ENCODE measurements at regions of chr5 and their contacts with region 1.

Region 1: DNA sequence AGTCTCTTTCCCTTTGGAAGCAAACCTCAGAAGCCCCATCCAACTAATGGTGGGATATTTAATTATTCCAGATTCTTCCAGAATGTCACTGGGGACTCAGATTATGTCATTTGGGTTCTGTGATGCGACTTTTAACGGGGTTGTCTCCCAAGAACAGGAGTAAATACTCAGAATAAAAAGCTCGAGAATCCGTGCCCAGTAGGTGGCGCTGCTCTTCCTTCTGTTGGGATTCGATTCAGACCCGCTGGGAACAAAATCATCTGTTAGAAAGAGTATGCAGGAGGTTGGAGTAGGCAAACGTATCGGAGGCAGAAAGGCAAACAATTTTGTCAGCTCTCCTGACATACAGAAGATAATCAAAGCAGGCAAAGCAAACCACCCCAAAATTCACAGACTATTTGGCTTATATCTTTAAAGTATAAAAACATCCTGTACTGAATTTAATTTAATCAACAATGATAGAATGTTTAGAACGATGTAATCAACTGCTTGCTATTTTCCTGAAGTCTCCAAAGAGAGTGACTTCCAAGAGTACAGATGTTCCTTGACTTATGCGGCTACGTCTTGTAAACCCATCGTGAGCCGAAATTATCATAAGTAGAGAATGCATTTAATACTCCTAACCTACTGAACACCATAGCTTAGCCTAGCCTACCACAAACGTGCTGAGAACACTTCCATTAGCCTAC is 169.8 kb upstream of the RAI14 start:
- DNase-seq: peak; percentile 83 to 87
- ATAC-seq: peak; percentile 82 to 86
- H3K4me3 ChIP-seq: no peak overlapping the region
- H3K27ac ChIP-seq: peak overlapping the region; percentile 57 to 62; a peak in 5 of 6 replicates
- H3K4me1 ChIP-seq: peaks cover 28% of the 10 kb centered on the region
- CTCF ChIP-seq: peak; percentile 96
- EP300 ChIP-seq: no peak
- POLR2A ChIP-seq: no peak
- RAD21 ChIP-seq: peak; percentile 97

Region 2: DNA sequence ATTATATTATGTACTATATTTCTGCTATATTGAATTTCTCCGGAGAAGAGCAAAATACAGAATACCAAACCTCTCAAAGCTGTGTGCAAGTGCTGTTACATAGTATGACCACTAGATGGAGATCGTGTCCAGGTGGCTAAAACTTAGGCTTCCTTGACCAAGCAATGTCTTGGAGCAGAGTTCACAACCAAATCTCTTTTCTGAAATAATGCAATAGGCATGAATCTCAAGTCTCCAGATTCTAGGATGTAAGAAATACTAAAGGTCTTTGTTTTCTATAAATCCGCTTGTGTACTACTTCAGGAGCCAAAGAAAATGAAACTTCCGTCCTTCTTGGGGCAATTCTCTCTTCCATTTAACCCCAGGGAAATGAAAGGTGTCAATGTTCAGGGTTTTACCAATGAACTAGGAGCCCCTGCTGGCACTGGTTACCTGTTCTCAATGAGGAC is 11.7 kb before region 1 on chr5:
- CTCF ChIA-PET with region 1: interaction called, 85 read pairs
- POLR2A ChIA-PET with region 1: no interaction called
- DNase-seq: peak; percentile 57 to 70
- ATAC-seq: peak; percentile 68 to 93; a peak in 5 of 6 replicates
- H3K4me3 ChIP-seq: no peak overlapping the region
- H3K27ac ChIP-seq: no peak overlapping the region
- H3K4me1 ChIP-seq: no peaks in the 10 kb centered on the region
- CTCF ChIP-seq: peak; percentile 92
- EP300 ChIP-seq: no peak
- POLR2A ChIP-seq: no peak
- RAD21 ChIP-seq: peak; percentile 90 to 94

Region 3: GRCh38 chr5:34499001-34499734 is 12.9 kb after region 1 on chr5:
- CTCF ChIA-PET with region 1: interaction called, 35 read pairs
- POLR2A ChIA-PET with region 1: interaction called, 3 read pairs
- DNase-seq: peak in 1 of 2 experiments; percentile 31
- ATAC-seq: peak; percentile 72 to 82
- H3K4me3 ChIP-seq: no peak overlapping the region
- H3K27ac ChIP-seq: peak overlapping the region; percentile 53 to 80; a peak in 5 of 6 replicates
- H3K4me1 ChIP-seq: peaks cover 32% of the 10 kb centered on the region
- CTCF ChIP-seq: no peak
- EP300 ChIP-seq: no peak
- POLR2A ChIP-seq: no peak
- RAD21 ChIP-seq: no peak

Region 4: DNA sequence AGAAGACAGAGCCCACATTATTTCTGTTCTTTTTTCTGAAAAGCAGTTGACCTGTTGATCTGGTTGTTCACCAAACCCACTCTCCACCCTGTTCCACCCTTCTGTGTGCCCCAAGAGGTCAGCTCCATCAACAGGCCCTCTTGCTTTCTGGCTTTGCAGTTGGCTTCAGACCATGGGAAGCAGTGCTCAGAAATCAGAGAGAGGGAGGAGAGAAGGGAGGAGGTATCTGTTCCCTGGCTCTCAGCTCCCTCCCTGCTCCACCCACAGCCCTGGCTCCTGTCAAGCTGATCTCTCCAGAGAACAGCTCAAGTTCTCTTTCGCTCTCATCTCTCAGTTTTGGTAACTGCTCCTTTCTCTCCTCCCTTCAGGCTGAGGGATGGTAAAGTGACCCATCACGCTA is 25.6 kb after region 1 on chr5:
- CTCF ChIA-PET with region 1: interaction called, 11 read pairs
- POLR2A ChIA-PET with region 1: no interaction called
- DNase-seq: no peak
- ATAC-seq: peak; percentile 47 to 80; a peak in 3 of 6 replicates
- H3K4me3 ChIP-seq: no peak overlapping the region
- H3K27ac ChIP-seq: no peak overlapping the region
- H3K4me1 ChIP-seq: peaks cover 27% of the 10 kb centered on the region
- CTCF ChIP-seq: no peak
- EP300 ChIP-seq: no peak
- POLR2A ChIP-seq: no peak
- RAD21 ChIP-seq: no peak

Region 5: DNA sequence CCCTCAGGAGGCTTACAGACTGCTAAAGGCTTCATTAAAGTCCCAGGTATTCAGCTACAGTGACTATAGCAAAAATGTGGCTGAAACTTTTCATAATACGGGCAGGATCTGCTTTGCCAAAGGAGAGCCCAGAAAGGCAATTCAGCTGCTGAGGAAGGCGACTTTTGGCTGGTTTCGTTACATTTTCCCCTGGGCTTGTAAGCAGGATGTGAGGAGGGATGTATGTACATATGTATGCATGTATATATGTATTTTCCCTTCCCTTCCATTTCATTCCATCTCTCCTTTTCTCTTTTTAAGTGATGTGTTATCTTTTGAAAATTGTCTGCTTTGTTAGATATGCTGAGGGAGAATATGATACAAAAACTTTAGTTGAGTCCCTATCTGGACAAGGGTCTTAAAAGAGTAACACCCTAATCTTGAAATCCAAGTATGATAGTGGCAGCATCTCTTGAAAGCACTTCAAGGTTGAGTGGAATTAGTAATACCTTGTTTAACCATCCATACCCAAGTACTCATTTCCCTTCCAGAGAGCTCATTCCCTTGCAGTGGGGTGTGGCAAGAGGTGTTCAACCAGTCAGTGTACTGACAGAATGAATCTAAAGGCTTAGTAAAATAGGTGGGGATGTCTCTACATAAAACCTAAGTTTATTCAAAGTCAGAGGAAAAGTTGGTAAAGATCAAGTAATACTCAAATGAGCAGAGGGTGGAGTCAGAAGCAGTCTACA is 400.3 kb after region 1 on chr5:
- CTCF ChIA-PET with region 1: interaction called, 621 read pairs
- POLR2A ChIA-PET with region 1: no interaction called
- DNase-seq: no peak
- ATAC-seq: no peak
- H3K4me3 ChIP-seq: no peak overlapping the region
- H3K27ac ChIP-seq: no peak overlapping the region
- H3K4me1 ChIP-seq: no peaks in the 10 kb centered on the region
- CTCF ChIP-seq: no peak
- EP300 ChIP-seq: no peak
- POLR2A ChIP-seq: no peak
- RAD21 ChIP-seq: no peak

Region 6: DNA sequence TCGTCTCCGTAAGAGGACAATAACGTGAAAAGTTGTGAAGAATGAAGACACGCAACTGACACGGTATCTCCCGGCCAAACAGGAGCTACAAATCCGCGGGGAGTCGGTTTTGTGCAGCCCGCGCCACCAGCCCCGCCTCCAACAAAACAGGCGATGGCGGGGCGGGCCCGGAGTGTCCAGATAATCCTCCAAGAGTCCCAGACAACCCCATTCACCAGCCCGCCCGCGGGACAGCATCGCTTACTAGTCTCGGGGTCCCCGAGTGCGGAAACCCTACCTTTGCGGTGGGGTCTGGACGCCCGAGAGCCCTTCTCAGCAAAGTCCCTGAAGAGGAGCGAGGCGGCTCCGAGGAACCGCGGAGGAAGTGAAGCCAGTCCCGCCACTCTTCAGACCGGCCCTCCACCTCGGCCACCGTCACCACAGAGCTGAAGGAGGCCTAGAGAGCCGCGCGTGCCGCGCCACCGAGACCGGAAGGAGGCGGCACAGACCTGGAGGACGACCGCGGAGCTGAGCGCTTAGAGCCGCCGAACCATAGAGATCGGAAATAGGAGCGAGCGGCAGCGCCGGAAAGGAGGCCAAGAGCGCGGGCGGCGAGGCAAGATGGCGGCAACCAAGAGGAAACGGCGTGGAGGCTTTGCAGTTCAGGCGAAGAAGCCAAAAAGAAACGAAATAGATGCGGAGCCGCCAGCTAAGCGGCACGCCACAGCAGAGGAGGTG is 429.0 kb after region 1 on chr5 and contains the starts of genes BRIX1 and RAD1:
- CTCF ChIA-PET with region 1: interaction called, 13 read pairs
- POLR2A ChIA-PET with region 1: interaction called, 4 read pairs
- DNase-seq: peak; percentile 86 to 98
- ATAC-seq: peak; percentile 99 to 100
- H3K4me3 ChIP-seq: peak within 1 kb of the TSS; percentile 96
- H3K27ac ChIP-seq: peak within 1 kb of the TSS; percentile 96 to 98
- H3K4me1 ChIP-seq: peaks cover 38% of the 10 kb centered on the region
- CTCF ChIP-seq: no peak
- EP300 ChIP-seq: no peak
- POLR2A ChIP-seq: peak; percentile 72
- RAD21 ChIP-seq: 0 out of 5 replicates have a peak, but pooled peaks of 1 of the 2 experiments have one; percentile 12
- polyA plus RNA-seq, gene BRIX1: 56.2 and 88.5 TPM in 2 replicates
- polyA plus RNA-seq, gene RAD1: 37.2 and 41.4 TPM in 2 replicates

Measured in A549 (cell line).